ENCODE measurements at regions of chr2 and their contacts with region 1.

Region 1: DNA sequence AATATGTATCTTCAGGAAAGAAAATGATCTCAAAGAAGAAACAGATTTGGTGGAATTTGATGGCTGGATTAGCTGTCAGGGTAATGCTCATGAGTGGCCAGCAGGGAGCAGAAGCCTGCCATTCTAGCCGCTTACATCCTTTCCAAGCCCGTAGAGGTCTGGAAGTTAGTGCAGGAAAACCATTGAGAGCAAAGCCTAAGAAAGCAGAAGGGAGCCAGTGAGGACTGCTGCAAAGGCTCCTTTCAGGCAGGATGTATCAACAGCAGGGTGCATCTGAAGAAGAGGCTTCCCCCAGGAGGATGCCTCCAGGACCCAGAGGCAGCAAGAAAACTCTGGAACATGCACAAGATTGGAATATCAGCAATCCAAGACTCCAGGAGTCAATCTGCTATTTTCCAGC is 22.9 kb upstream of the LBH start:
- DNase-seq: peak; percentile 62
- H3K4me3 ChIP-seq: no peak overlapping the region
- H3K27ac ChIP-seq: no peak overlapping the region
- H3K4me1 ChIP-seq: peaks cover 13% of the 10 kb centered on the region
- CTCF ChIP-seq: peak; percentile 95

Region 2: GRCh38 chr2:30098266-30099005 is 110.0 kb before region 1 on chr2:
- CTCF ChIA-PET with region 1: no interaction called
- POLR2A ChIA-PET with region 1: interaction called, 5 read pairs
- intact Hi-C with region 1: loop called (anchors 5 kb)
- DNase-seq: peak; percentile 54
- H3K4me3 ChIP-seq: peak overlapping the region; percentile 8
- H3K27ac ChIP-seq: no peak overlapping the region
- H3K4me1 ChIP-seq: peaks cover 15% of the 10 kb centered on the region
- CTCF ChIP-seq: no peak

Region 3: GRCh38 chr2:30165050-30165520 is 43.4 kb before region 1 on chr2:
- CTCF ChIA-PET with region 1: interaction called, 5 read pairs
- POLR2A ChIA-PET with region 1: interaction called, 7 read pairs
- intact Hi-C with region 1: loop called (anchors 2 kb)
- DNase-seq: peak; percentile 92
- H3K4me3 ChIP-seq: no peak overlapping the region
- H3K27ac ChIP-seq: no peak overlapping the region
- H3K4me1 ChIP-seq: peaks cover 22% of the 10 kb centered on the region
- CTCF ChIP-seq: peak; percentile 99

Region 4: GRCh38 chr2:30447149-30448045 is 238.9 kb after region 1 on chr2 and contains the start of gene LCLAT1:
- CTCF ChIA-PET with region 1: interaction called, 3 read pairs
- POLR2A ChIA-PET with region 1: interaction called, 4 read pairs
- intact Hi-C with region 1: loop called (anchors 5 kb)
- DNase-seq: peak; percentile 88
- H3K4me3 ChIP-seq: peak within 1 kb of the TSS; percentile 89
- H3K27ac ChIP-seq: peak within 1 kb of the TSS; percentile 36
- H3K4me1 ChIP-seq: peaks cover 14% of the 10 kb centered on the region
- CTCF ChIP-seq: no peak
- total RNA-seq, gene LCLAT1: 9.2 and 11.5 TPM in 2 replicates

Region 5: DNA sequence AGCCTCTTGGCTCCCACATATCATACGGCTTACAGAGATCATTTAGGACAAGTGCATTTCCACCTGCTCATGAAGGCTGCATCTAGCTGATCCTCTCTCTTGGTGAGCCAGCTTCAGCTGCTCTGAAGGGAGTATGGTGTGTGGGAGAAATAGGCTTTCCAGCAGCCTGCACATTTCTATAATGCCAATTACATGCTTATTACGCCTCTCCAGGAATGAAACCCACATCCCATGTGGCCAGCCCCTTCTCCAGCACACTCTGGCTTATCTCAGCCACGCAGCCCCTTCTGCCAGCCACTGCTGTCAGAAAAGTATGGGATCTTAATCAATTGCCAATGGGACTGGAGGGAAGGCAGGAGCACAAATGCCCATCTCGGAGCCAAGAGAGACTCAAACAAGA is 812.3 kb after region 1 on chr2:
- CTCF ChIA-PET with region 1: no interaction called
- POLR2A ChIA-PET with region 1: no interaction called
- intact Hi-C with region 1: no loop called
- DNase-seq: no peak
- H3K4me3 ChIP-seq: no peak overlapping the region
- H3K27ac ChIP-seq: no peak overlapping the region
- H3K4me1 ChIP-seq: no peaks in the 10 kb centered on the region
- CTCF ChIP-seq: no peak

Measured in OCI-LY7 (cell line).